Colonic mucosa (tissue), 4 donors: ENCODE measurements at regions of chr19 and their contacts with region 1.

Region 1: GRCh38 chr19:47765523-47766358 is 12.8 kb upstream of the SELENOW start:
- DNase-seq: peak; percentile 68
- H3K4me3 ChIP-seq: no peak overlapping the region
- H3K27ac ChIP-seq: no peak overlapping the region
- H3K4me1 ChIP-seq: no peaks in the 10 kb centered on the region
- H3K27me3 ChIP-seq: no peaks in the 10 kb centered on the region
- CTCF ChIP-seq: peak; percentile 78

Region 2: GRCh38 chr19:47729992-47730889 is 35.5 kb before region 1 on chr19:
- intact Hi-C with region 1: no loop called
- DNase-seq: peak; percentile 75
- H3K4me3 ChIP-seq: no peak overlapping the region
- H3K27ac ChIP-seq: peak overlapping the region; percentile 40
- H3K4me1 ChIP-seq: peaks cover 9% of the 10 kb centered on the region
- H3K27me3 ChIP-seq: no peaks in the 10 kb centered on the region
- CTCF ChIP-seq: no peak

Region 3: GRCh38 chr19:47781587-47782262 is 16.0 kb after region 1 on chr19:
- intact Hi-C with region 1: loop called (anchors 2 kb)
- DNase-seq: peak; percentile 41
- H3K4me3 ChIP-seq: no peak overlapping the region
- H3K27ac ChIP-seq: no peak overlapping the region
- H3K4me1 ChIP-seq: no peaks in the 10 kb centered on the region
- H3K27me3 ChIP-seq: no peaks in the 10 kb centered on the region
- CTCF ChIP-seq: no peak

Region 4: DNA sequence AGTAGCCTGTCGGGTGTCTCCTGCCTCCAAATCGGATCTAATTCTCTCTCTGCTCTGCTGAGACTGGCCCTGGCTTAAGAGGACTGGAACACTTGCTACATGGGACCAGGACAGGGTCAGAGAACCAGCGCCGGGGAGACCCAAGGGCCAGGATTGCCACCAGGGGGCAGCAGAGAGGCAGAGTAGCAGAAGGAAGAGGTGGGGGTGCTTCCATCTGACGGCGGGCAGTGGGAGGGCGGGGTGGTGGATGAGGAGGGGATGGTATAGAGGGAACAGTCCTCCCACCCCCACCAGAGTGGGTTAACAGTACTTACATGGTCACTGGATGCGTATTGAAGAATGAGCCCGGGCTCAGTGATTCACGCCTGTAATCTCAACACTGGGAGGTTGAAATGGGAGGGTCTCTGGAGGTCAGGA is 24.7 kb after region 1 on chr19:
- intact Hi-C with region 1: loop called (anchors 2 kb)
- DNase-seq: peak; percentile 87
- H3K4me3 ChIP-seq: no peak overlapping the region
- H3K27ac ChIP-seq: no peak overlapping the region
- H3K4me1 ChIP-seq: no peaks in the 10 kb centered on the region
- H3K27me3 ChIP-seq: no peaks in the 10 kb centered on the region
- CTCF ChIP-seq: peak; percentile 78